ENCODE measurements at regions of chr10 and their contacts with region 1.

Region 1: DNA sequence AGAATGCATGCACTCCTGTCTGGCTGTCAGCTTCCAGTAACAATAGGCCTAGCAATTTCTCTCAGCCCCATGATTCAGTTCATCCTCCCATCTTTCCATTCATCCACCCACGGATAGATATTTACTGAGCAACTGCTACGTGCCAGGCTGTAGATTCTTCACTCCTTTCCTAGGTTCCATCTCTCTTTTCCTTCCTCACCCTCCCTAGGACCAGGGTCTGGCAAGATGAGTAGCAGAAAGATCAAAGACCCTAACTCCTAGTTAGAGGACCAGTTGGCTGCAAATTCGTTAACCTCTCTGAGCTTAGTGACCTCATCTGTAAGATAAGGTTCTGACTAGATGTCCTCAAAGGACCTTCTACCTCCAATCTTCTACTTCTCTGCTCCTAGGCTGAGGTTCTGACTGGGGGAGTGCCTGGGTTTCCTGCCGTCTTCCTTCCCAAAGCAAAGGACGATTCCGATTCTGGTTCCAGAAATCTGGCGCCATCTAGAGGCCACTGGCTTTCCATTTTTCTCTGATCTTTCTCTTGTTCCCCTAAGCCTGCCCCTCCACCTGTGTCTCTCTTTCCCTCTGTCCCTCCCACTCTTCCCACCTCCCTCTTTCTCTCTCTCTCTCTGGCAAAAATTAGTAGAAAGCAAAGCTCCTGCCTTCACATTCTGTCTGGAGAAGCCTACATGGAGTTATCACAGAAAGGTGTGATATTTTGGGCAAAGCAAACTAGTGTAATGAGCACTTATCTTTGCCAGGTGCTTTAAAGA is 26.2 kb downstream of the TBATA start:
- DNase-seq: peak; percentile 49
- H3K4me3 Mint-ChIP-seq: no peak overlapping the region
- H3K27ac Mint-ChIP-seq: no peak overlapping the region
- H3K4me1 Mint-ChIP-seq: peaks cover 9% of the 10 kb centered on the region
- H3K27me3 Mint-ChIP-seq: no peaks in the 10 kb centered on the region

Region 2: DNA sequence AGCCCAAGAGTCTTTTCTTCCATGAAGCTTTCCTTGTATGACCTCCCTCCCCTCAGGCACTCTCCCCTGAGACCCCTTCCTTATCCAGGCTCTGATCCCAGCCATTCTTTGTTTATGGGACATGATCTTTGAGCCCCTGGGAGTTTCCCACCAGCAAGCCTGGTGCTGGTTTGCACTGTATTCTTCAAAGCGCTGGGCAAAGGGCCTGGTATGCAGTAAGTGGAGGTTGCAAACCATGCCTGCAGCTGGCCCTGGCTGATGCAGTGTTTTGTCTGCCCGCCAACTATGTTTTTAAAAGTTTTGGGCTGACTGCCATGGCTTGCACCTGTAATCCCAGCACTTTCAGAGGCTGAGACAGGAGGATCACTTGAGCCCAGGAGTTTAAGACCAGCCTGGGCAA is 310.7 kb before region 1 on chr10:
- intact Hi-C with region 1: no loop called
- DNase-seq: no peak
- H3K4me3 Mint-ChIP-seq: no peak overlapping the region
- H3K27ac Mint-ChIP-seq: no peak overlapping the region
- H3K4me1 Mint-ChIP-seq: no peaks in the 10 kb centered on the region
- H3K27me3 Mint-ChIP-seq: peaks cover 16% of the 10 kb centered on the region

Region 3: GRCh38 chr10:70461215-70461986 is 297.5 kb before region 1 on chr10:
- intact Hi-C with region 1: loop called (anchors 1 kb)
- DNase-seq: peak; percentile 21
- H3K4me3 Mint-ChIP-seq: no peak overlapping the region
- H3K27ac Mint-ChIP-seq: no peak overlapping the region
- H3K4me1 Mint-ChIP-seq: no peaks in the 10 kb centered on the region
- H3K27me3 Mint-ChIP-seq: peaks cover 51% of the 10 kb centered on the region

Region 4: GRCh38 chr10:70549962-70550458 is 208.9 kb before region 1 on chr10:
- intact Hi-C with region 1: loop called (anchors 1 kb)
- DNase-seq: peak; percentile 58
- H3K4me3 Mint-ChIP-seq: no peak overlapping the region
- H3K27ac Mint-ChIP-seq: no peak overlapping the region
- H3K4me1 Mint-ChIP-seq: peaks cover 4% of the 10 kb centered on the region
- H3K27me3 Mint-ChIP-seq: peaks cover 2% of the 10 kb centered on the region

Region 5: DNA sequence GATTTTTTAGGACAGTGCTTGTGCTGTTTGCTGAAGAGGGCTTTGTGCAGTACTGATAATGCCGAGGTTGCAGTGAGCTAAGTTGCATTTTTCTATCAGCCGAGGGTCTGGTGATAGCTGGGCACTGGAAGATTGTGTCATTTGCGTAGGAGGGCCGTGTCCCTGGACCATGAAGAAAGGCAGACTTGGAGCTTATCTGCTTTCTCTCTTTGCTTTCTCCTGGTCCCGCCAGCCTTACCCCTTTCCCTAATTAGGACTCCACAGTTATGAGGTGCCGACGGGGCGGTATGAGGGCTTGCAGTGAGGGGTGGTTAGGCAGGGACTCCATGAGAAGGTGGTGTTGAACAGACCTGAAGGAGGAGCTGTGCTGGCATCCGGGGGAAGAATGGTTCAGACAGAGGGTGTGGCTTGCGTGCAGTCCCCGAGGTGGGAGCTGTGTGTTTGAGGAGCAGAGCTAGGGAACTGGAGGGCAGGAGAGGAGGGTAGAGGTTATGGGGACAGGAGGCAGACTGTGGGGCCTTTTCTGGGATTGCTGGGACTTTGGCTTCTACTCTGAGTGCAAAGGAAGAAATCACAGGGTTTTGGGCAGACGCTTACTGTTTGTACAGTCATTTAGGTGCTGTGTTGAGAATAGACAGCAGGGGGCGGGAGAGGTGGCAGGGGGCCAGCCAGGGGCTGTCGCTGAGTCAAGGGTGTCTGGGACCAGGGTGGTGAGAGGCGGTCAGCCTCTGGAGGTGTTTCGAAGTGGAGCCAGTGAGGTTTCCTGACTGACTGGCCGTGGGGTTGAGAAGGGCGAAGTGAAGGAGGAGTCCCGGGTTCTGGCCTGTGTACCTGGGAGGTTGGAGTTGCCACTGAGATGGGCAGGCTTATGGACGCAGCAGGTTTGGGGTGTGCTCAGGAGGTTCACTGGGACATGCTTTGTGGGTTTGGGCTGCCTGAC is 199.8 kb before region 1 on chr10:
- intact Hi-C with region 1: loop called (anchors 1 kb)
- DNase-seq: peak; percentile 50
- H3K4me3 Mint-ChIP-seq: peak overlapping the region; percentile 67
- H3K27ac Mint-ChIP-seq: peak overlapping the region; percentile 65
- H3K4me1 Mint-ChIP-seq: peaks cover 27% of the 10 kb centered on the region
- H3K27me3 Mint-ChIP-seq: no peaks in the 10 kb centered on the region

Measured in activated T-helper 1 cell treated with anti-CD3 and anti-CD28 coated beads, Interleukin-12 subunit alpha, Interleukin-12 subunit beta, Interleukin-2, Interleukin-4 antibody, amounts not matched to agents 30 ng/mL and 10 ng/mL and 1 ng/mL, durations not matched to agents 14 hours and 24 hours and 36 hours (primary cell).